Transverse colon (tissue), 4 donors: ENCODE measurements at regions of chr10 and their contacts with region 1.

Region 1: GRCh38 chr10:3785257-3785850 is 345 bp upstream of the KLF6 start:
- DNase-seq: peak; percentile 99
- H3K4me3 ChIP-seq: peak overlapping the region; percentile 63 to 98 (median 96)
- H3K27ac ChIP-seq: peak overlapping the region; percentile 99 to 100 (median 100)
- H3K4me1 ChIP-seq: peaks cover 0 to 28% (median 26%) of the 10 kb centered on the region in 4 donors
- H3K27me3 ChIP-seq: no peaks in the 10 kb centered on the region
- CTCF ChIP-seq: peak in 1 of 5 experiments; percentile 8
- EP300 ChIP-seq: peak; percentile 49
- POLR2A ChIP-seq: peak; percentile 98

Region 2: GRCh38 chr10:3239066-3239919 is 546.1 kb before region 1 on chr10:
- in situ Hi-C with region 1: loop called in 2 of 4 experiments (anchors 25 kb)
- intact Hi-C with region 1: no loop called
- DNase-seq: peak; percentile 83
- H3K4me3 ChIP-seq: no peak overlapping the region
- H3K27ac ChIP-seq: no peak overlapping the region
- H3K4me1 ChIP-seq: peaks cover 0 to 7% (median 0%) of the 10 kb centered on the region in 4 donors
- H3K27me3 ChIP-seq: no peaks in the 10 kb centered on the region
- CTCF ChIP-seq: peak; percentile 88 to 95 (median 91)
- EP300 ChIP-seq: no peak
- POLR2A ChIP-seq: no peak

Region 3: GRCh38 chr10:3869036-3869435 is 83.7 kb after region 1 on chr10:
- in situ Hi-C with region 1: loop called in 1 of 4 experiments (anchors 10 kb)
- intact Hi-C with region 1: no loop called
- DNase-seq: peak; percentile 41
- H3K4me3 ChIP-seq: no peak overlapping the region
- H3K27ac ChIP-seq: peak overlapping the region; percentile 71 to 80 (median 78)
- H3K4me1 ChIP-seq: peaks cover 1 to 65% (median 25%) of the 10 kb centered on the region in 4 donors
- H3K27me3 ChIP-seq: no peaks in the 10 kb centered on the region
- CTCF ChIP-seq: no peak
- EP300 ChIP-seq: no peak
- POLR2A ChIP-seq: no peak

Region 4: GRCh38 chr10:4034907-4035598 is 249.7 kb after region 1 on chr10:
- in situ Hi-C with region 1: loop called in 1 of 4 experiments (anchors 25 kb)
- intact Hi-C with region 1: no loop called
- DNase-seq: peak; percentile 22
- H3K4me3 ChIP-seq: peak overlapping the region in 2 of 4 donors; percentile 0 to 35
- H3K27ac ChIP-seq: peak overlapping the region; percentile 24 to 72 (median 62)
- H3K4me1 ChIP-seq: peaks cover 0 to 18% (median 4%) of the 10 kb centered on the region in 4 donors
- H3K27me3 ChIP-seq: no peaks in the 10 kb centered on the region
- CTCF ChIP-seq: no peak
- EP300 ChIP-seq: no peak
- POLR2A ChIP-seq: no peak

Region 5: GRCh38 chr10:4767033-4767814 is 981.9 kb after region 1 on chr10:
- in situ Hi-C with region 1: no loop called
- intact Hi-C with region 1: loop called (anchors 2 kb)
- DNase-seq: no peak
- H3K4me3 ChIP-seq: no peak overlapping the region
- H3K27ac ChIP-seq: no peak overlapping the region
- H3K4me1 ChIP-seq: peaks cover 0 to 19% (median 7%) of the 10 kb centered on the region in 4 donors
- H3K27me3 ChIP-seq: no peaks in the 10 kb centered on the region
- CTCF ChIP-seq: peak; percentile 59 to 81 (median 76)
- EP300 ChIP-seq: no peak
- POLR2A ChIP-seq: no peak